ENCODE measurements at regions of chr11 and their contacts with region 1.

Region 1: GRCh38 chr11:78228467-78228866 is 39.7 kb downstream of the USP35 start:
- DNase-seq: peak; percentile 22
- H3K4me3 ChIP-seq: no peak overlapping the region
- H3K27ac ChIP-seq: no peak overlapping the region
- H3K4me1 ChIP-seq: peaks cover 0 to 14% (median 0%) of the 10 kb centered on the region in 4 donors
- H3K27me3 ChIP-seq: no peaks in the 10 kb centered on the region
- CTCF ChIP-seq: peak; percentile 42 to 64 (median 55)
- EP300 ChIP-seq: no peak
- POLR2A ChIP-seq: no peak

Region 2: DNA sequence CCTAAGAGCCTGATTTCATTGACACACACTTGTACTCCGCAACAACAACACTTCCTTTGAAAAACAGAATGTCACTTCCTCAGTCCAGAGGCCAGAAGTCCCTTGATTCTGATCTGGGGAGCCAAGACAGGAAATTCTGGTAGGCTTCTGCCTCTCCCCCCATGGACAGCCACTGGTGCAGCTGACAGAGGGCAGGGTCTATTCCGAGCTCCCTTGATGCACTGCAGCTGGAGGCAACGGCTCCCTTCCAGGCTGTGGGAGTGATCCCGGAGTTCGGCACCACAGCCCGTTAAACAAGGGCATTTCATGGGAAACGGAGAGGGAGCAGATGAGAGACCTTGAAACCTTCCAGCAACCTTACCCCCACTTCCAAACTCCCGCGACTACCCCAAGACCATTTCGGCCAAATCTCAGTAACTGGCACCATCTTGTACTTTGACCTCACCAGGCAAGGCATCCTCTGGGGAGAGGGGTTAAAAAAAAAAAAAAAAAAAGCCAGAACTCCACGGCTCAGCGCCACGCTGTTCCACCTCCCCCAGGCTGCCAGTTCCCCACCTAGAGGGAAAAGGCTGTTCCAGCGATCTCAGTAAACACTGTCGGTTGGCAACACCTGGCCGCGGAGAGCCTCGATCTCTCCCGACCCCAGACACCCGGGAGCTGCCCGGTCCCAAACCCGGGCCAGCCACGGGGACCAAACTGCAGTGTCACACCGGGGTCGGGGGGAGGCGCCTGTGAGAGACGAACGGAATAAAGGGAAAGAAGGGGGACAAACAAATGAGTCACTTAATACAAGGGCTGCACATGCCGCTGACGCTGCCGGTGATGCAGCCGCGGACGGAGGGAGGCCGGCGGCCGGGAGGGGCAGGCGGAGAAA is 188.1 kb after region 1 on chr11:
- in situ Hi-C with region 1: loop called in 1 of 4 experiments (anchors 25 kb)
- intact Hi-C with region 1: no loop called
- DNase-seq: peak; percentile 86
- H3K4me3 ChIP-seq: peak overlapping the region; percentile 81 to 100 (median 91)
- H3K27ac ChIP-seq: peak overlapping the region; percentile 97 to 99 (median 98)
- H3K4me1 ChIP-seq: peaks cover 13 to 48% (median 29%) of the 10 kb centered on the region in 4 donors
- H3K27me3 ChIP-seq: no peaks in the 10 kb centered on the region
- CTCF ChIP-seq: peak; percentile 45 to 70 (median 54)
- EP300 ChIP-seq: no peak
- POLR2A ChIP-seq: peak; percentile 73

Region 3: DNA sequence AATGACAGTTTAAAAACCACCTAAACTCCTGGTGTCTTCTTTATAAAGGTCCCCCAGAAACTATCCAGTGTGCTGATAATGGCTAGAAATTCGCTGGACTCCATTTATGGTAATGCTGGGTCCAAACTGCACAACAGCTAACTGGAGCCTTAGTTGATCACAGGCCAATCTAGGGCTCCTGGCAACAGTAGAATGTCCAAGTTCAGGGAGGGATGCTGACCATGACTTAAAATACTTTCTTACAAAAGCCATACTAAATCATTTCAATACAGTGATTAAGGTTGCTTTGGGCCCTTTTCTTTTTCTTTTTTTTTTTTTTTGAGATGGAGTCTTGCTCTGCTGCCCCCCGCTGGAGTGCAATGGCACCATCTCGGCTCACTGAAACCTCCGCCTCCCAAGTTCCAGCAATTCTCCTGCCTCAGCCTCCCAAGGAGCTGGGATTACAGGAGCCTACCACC is 203.6 kb after region 1 on chr11:
- in situ Hi-C with region 1: loop called in 1 of 4 experiments (anchors 10 kb)
- intact Hi-C with region 1: no loop called
- DNase-seq: no peak
- H3K4me3 ChIP-seq: no peak overlapping the region
- H3K27ac ChIP-seq: no peak overlapping the region
- H3K4me1 ChIP-seq: peaks cover 0 to 24% (median 10%) of the 10 kb centered on the region in 4 donors
- H3K27me3 ChIP-seq: no peaks in the 10 kb centered on the region
- CTCF ChIP-seq: peak; percentile 28 to 49 (median 37)
- EP300 ChIP-seq: no peak
- POLR2A ChIP-seq: no peak

Region 4: GRCh38 chr11:78564490-78565467 is 336.3 kb after region 1 on chr11:
- in situ Hi-C with region 1: loop called (anchors 5 to 25 kb)
- intact Hi-C with region 1: no loop called
- DNase-seq: peak; percentile 23
- H3K4me3 ChIP-seq: no peak overlapping the region
- H3K27ac ChIP-seq: no peak overlapping the region
- H3K4me1 ChIP-seq: peaks cover 9 to 37% (median 25%) of the 10 kb centered on the region in 4 donors
- H3K27me3 ChIP-seq: no peaks in the 10 kb centered on the region
- CTCF ChIP-seq: peak; percentile 68 to 88 (median 78)
- EP300 ChIP-seq: no peak
- POLR2A ChIP-seq: no peak

Region 5: DNA sequence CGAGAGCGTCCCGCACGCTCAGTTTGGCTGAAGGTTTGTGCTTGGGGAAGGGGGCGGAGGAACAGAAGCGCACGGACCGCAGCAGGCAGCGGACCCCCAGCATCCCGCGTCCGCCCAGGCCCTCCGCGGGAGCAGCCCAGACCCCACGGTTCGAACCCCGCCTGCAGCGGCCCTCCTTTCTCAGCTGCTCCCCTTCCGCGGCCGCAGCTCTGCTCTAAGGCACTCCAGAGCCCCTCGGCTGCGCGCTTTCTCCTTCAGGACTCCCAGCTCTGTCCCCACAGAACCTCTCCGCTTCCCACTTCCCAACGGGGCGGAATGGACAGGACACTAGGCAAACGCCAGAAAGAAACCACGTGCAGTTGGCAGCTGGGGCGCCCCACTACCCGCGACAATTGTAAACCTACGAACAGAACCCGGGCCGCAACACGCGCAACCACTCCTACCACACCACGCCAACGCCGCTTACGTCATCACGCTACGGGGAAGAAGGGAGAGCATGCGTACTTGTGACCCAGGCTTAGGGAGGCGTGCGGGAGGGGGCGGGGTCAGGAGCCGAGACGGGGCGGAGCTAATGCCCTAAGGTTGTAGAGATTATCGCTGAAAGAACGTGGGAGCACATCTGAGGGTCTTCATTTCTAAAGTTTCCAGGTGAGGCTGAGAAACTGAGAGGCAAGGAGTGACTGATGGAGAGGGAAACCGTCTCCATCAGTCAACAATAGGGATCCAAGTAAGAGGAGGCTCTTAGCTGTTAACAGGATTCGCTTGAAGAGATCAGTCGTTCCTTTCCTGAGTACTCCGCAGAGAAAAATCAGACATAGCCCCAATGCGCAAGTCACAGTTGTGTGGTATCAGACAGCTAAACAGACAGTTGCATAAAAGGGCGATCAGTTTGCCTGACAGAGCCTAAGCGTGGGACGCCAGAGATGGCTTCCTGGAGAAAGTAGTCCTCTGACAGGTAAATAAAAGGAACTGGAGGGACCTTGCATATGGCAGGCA is 346.2 kb after region 1 on chr11 and contains the start of gene NARS2:
- in situ Hi-C with region 1: loop called in 3 of 4 experiments (anchors 10 to 25 kb)
- intact Hi-C with region 1: no loop called
- DNase-seq: peak; percentile 98
- H3K4me3 ChIP-seq: peak within 1 kb of the TSS; percentile 53 to 91 (median 66)
- H3K27ac ChIP-seq: peak within 1 kb of the TSS; percentile 80 to 88 (median 84)
- H3K4me1 ChIP-seq: peaks cover 6 to 17% (median 8%) of the 10 kb centered on the region in 4 donors
- H3K27me3 ChIP-seq: no peaks in the 10 kb centered on the region
- CTCF ChIP-seq: no peak
- EP300 ChIP-seq: no peak
- POLR2A ChIP-seq: peak; percentile 79
- total RNA-seq, gene NARS2: 6.4 to 15.1 (median 10.4) TPM

Measured in transverse colon (tissue), 4 donors.